IMR-90 (cell line): ENCODE measurements at regions of chr10 and their contacts with region 1.

Region 1: DNA sequence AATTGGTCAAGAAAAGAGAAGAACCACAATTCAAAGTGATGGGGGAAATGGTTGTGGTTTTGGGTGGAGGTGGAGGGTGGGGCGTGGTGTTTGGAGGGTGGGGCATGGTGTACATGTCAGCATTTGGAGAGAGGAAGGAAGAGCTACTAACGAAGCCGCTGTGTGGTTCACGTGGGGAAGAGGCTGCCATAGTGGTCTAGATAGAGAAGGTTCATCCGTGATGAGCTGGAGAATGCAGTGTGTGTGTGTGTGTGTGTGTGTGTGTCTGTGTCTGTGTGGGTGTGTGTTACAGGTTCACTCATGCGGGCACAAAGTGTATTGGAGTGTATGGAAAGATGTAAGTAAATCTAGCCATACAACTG is 6.1 kb upstream of the VCL start:
- DNase-seq: no peak
- ATAC-seq: no peak
- H3K4me3 ChIP-seq: no peak overlapping the region
- H3K27ac ChIP-seq: no peak overlapping the region
- H3K4me1 ChIP-seq: peaks cover 4% of the 10 kb centered on the region; the same call in 1 of the 2 replicates
- H3K27me3 ChIP-seq: no peaks in the 10 kb centered on the region
- CTCF ChIP-seq: no peak
- POLR2A ChIP-seq: no peak
- RAD21 ChIP-seq: no peak

Region 2: GRCh38 chr10:73625884-73626752 is 365.7 kb before region 1 on chr10:
- CTCF ChIA-PET with region 1: no interaction called
- POLR2A ChIA-PET with region 1: no interaction called
- dilution Hi-C with region 1: no loop called
- in situ Hi-C with region 1: no loop called
- intact Hi-C with region 1: no loop called
- DNase-seq: peak; percentile 98
- ATAC-seq: peak; percentile 96
- H3K4me3 ChIP-seq: peak overlapping the region; percentile 67
- H3K27ac ChIP-seq: peak overlapping the region; percentile 92
- H3K4me1 ChIP-seq: 0 out of 2 replicates have a peak, but pooled peaks cover 1% of the 10 kb centered on the region
- H3K27me3 ChIP-seq: no peaks in the 10 kb centered on the region
- CTCF ChIP-seq: no peak
- POLR2A ChIP-seq: peak; percentile 88
- RAD21 ChIP-seq: no peak

Region 3: GRCh38 chr10:73915206-73915851 is 76.5 kb before region 1 on chr10:
- CTCF ChIA-PET with region 1: no interaction called
- POLR2A ChIA-PET with region 1: no interaction called
- dilution Hi-C with region 1: no loop called
- in situ Hi-C with region 1: no loop called
- intact Hi-C with region 1: no loop called
- DNase-seq: no peak
- ATAC-seq: no peak
- H3K4me3 ChIP-seq: no peak overlapping the region
- H3K27ac ChIP-seq: peak overlapping the region; percentile 16
- H3K4me1 ChIP-seq: peaks cover 22% of the 10 kb centered on the region
- H3K27me3 ChIP-seq: no peaks in the 10 kb centered on the region
- CTCF ChIP-seq: no peak
- POLR2A ChIP-seq: 0 out of 2 replicates have a peak, but pooled peaks have one; percentile 1
- RAD21 ChIP-seq: no peak

Region 4: GRCh38 chr10:73956476-73957359 is 35.1 kb before region 1 on chr10:
- CTCF ChIA-PET with region 1: no interaction called
- POLR2A ChIA-PET with region 1: no interaction called
- dilution Hi-C with region 1: no loop called
- in situ Hi-C with region 1: no loop called
- intact Hi-C with region 1: loop called (anchors 5 kb)
- DNase-seq: peak; percentile 62
- ATAC-seq: peak; percentile 72
- H3K4me3 ChIP-seq: no peak overlapping the region
- H3K27ac ChIP-seq: peak overlapping the region; percentile 69
- H3K4me1 ChIP-seq: peaks cover 15% of the 10 kb centered on the region
- H3K27me3 ChIP-seq: no peaks in the 10 kb centered on the region
- CTCF ChIP-seq: no peak
- POLR2A ChIP-seq: no peak
- RAD21 ChIP-seq: no peak; the same call in 1 of the 2 replicates

Region 5: GRCh38 chr10:74176380-74177139 is 184.7 kb after region 1 on chr10:
- CTCF ChIA-PET with region 1: no interaction called
- POLR2A ChIA-PET with region 1: no interaction called
- dilution Hi-C with region 1: no loop called
- in situ Hi-C with region 1: no loop called
- intact Hi-C with region 1: no loop called
- DNase-seq: peak; percentile 92
- ATAC-seq: peak; percentile 99
- H3K4me3 ChIP-seq: peak overlapping the region; percentile 82
- H3K27ac ChIP-seq: peak overlapping the region; percentile 40
- H3K4me1 ChIP-seq: no peaks in the 10 kb centered on the region; the same call in 1 of the 2 replicates
- H3K27me3 ChIP-seq: no peaks in the 10 kb centered on the region
- CTCF ChIP-seq: no peak
- POLR2A ChIP-seq: peak; percentile 98
- RAD21 ChIP-seq: no peak